ENCODE measurements at regions of chr17 and their contacts with region 1.

Region 1: GRCh38 chr17:42819944-42820535 is 4.0 kb downstream of the BECN1 start:
- DNase-seq: peak; percentile 80
- H3K4me3 ChIP-seq: no peak overlapping the region
- H3K27ac ChIP-seq: no peak overlapping the region
- H3K4me1 ChIP-seq: peaks cover 20% of the 10 kb centered on the region
- CTCF ChIP-seq: peak; percentile 98

Region 2: GRCh38 chr17:42698736-42699414 is 121.2 kb before region 1 on chr17:
- CTCF ChIA-PET with region 1: interaction called, 11 read pairs
- POLR2A ChIA-PET with region 1: no interaction called
- intact Hi-C with region 1: no loop called
- DNase-seq: no peak
- H3K4me3 ChIP-seq: no peak overlapping the region
- H3K27ac ChIP-seq: no peak overlapping the region
- H3K4me1 ChIP-seq: peaks cover 3% of the 10 kb centered on the region
- CTCF ChIP-seq: no peak

Region 3: GRCh38 chr17:42720996-42721583 is 99.0 kb before region 1 on chr17:
- CTCF ChIA-PET with region 1: no interaction called
- POLR2A ChIA-PET with region 1: no interaction called
- intact Hi-C with region 1: loop called (anchors 2 kb)
- DNase-seq: peak; percentile 84
- H3K4me3 ChIP-seq: no peak overlapping the region
- H3K27ac ChIP-seq: no peak overlapping the region
- H3K4me1 ChIP-seq: no peaks in the 10 kb centered on the region
- CTCF ChIP-seq: peak; percentile 94

Region 4: DNA sequence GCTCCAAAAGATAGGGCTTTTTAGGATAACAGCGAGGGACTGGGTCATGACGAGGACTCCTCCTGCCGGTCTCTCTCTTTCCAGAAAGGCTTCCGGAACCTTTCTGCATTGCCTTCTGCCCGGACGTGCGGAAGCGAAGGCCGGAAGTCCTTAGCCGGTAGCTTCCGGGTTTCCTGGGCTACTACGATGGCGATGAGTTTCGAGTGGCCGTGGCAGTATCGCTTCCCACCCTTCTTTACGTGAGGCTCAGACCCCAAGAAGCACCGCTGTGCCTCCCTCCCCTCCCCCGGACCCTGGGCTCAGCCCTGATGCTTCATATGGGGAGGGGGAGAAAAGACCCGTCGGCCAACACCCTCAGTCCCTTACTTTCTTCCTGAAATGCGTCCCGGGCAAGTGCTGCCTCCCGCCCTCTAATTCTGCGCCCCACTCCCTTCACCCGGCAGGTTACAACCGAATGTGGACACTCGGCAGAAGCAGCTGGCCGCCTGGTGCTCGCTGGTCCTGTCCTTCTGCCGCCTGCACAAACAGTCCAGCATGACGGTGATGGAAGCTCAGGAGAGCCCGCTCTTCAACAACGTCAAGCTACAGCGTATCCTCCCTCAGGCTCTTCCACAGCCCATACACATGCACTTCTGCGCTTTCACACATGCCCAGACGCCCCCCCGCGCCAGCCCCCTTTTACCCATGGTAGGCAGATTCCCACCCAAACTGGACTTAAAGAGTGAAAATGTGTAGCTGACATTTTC is 46.6 kb before region 1 on chr17 and contains the start of gene VPS25:
- CTCF ChIA-PET with region 1: no interaction called
- POLR2A ChIA-PET with region 1: interaction called, 3 read pairs
- intact Hi-C with region 1: loop called (anchors 1 kb)
- DNase-seq: peak; percentile 88
- H3K4me3 ChIP-seq: peak within 1 kb of the TSS; percentile 88
- H3K27ac ChIP-seq: peak within 1 kb of the TSS; percentile 42
- H3K4me1 ChIP-seq: peaks cover 7% of the 10 kb centered on the region
- CTCF ChIP-seq: no peak; the same call in 1 of the 2 replicates
- total RNA-seq, gene VPS25: 70.7 and 78.4 TPM in 2 replicates

Region 5: DNA sequence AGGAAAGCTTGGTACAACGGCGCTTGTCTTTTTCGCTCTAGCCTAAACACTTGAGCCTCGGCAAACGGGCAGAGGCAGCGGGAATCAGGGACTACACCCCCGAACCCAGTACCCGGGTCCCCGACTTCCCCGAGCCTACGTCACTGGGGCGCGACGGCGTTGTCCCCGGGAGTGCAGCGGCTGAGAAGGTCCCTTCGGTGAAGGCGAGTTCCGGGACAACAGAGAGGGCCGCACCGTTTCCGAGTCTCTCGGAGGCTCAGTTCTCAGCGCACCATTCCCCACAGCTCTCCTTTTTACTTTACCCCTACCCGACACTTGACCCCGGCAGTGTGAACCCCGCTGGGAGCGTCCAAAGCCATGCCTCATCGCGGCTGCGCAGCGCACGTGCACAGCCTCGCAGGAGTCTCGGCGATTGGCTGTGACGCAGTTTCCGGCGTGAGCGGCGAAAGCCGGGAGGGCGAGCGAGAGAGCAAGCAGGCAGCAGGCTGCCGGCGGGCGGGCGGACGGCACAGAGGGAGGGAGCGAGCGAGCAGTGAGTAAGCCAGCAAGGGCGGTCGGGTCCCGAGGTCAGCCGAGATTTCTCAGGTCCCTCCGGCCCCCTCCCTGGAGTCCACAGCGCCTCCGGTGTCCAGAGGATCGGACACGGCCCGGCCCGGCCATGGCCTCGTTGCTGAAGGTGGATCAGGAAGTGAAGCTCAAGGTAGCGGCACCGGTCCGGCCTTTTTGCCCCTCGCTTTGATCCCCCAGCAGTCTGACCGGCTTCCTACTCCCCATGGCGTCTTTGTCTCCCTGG is 13.1 kb after region 1 on chr17 and contains the start of gene PSME3:
- CTCF ChIA-PET with region 1: interaction called, 4 read pairs
- POLR2A ChIA-PET with region 1: interaction called, 12 read pairs
- intact Hi-C with region 1: no loop called
- DNase-seq: peak; percentile 91
- H3K4me3 ChIP-seq: peak within 1 kb of the TSS; percentile 99
- H3K27ac ChIP-seq: peak within 1 kb of the TSS; percentile 60
- H3K4me1 ChIP-seq: peaks cover 15% of the 10 kb centered on the region
- CTCF ChIP-seq: no peak
- total RNA-seq, gene PSME3: 80.3 and 81.9 TPM in 2 replicates

Region 6: GRCh38 chr17:42928714-42929496 is 108.9 kb after region 1 on chr17:
- CTCF ChIA-PET with region 1: no interaction called
- POLR2A ChIA-PET with region 1: no interaction called
- intact Hi-C with region 1: loop called (anchors 1 kb)
- DNase-seq: peak; percentile 87
- H3K4me3 ChIP-seq: no peak overlapping the region
- H3K27ac ChIP-seq: peak overlapping the region; percentile 10
- H3K4me1 ChIP-seq: peaks cover 8% of the 10 kb centered on the region
- CTCF ChIP-seq: peak; percentile 91

Measured in OCI-LY7 (cell line).